ENCODE measurements at regions of chr11 and their contacts with region 1.

Region 1: GRCh38 chr11:7571640-7572000 is 57.8 kb downstream of the PPFIBP2 start:
- DNase-seq: peak; percentile 71
- ATAC-seq: peak; percentile 78

Region 2: GRCh38 chr11:7513234-7514098 is 58.2 kb before region 1 on chr11 and contains the start of gene PPFIBP2:
- intact Hi-C with region 1: loop called (anchors 10 kb)
- DNase-seq: peak; percentile 90
- ATAC-seq: peak; percentile 94
- total RNA-seq, gene PPFIBP2: 26.5 TPM

Region 3: GRCh38 chr11:7657306-7658025 is 85.8 kb after region 1 on chr11:
- intact Hi-C with region 1: loop called (anchors 5 kb)
- DNase-seq: peak; percentile 66
- ATAC-seq: peak; percentile 91

Measured in Right ventricle myocardium superior (tissue), 1 donor.